ENCODE measurements at regions of chr4 and their contacts with region 1.

Region 1: DNA sequence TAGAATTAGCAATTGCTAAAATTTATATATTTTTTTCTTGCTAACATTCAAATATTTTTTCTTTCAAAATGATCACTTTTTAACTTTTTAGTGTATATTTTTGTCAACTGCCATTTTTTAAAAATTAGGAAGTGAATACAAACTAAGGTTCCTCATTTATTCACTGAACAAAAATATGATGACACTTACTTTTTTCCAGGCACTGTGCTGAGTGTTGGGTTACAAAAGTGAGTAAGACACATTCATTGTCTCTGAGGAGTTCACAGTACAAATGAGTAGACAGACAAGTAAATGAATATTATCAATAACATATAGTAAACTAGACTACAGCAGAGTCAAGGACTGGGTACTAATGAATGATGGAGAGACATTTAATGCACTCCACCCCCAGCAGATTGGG is 543.5 kb downstream of the PDHA2 start:
- DNase-seq: no peak
- ATAC-seq: no peak
- H3K4me3 Mint-ChIP-seq: no peak overlapping the region
- H3K27ac Mint-ChIP-seq: no peak overlapping the region
- H3K4me1 Mint-ChIP-seq: no peaks in the 10 kb centered on the region
- H3K27me3 Mint-ChIP-seq: peaks cover 3% of the 10 kb centered on the region; the same call in 1 of the 2 replicates
- CTCF ChIP-seq: no peak

Region 2: DNA sequence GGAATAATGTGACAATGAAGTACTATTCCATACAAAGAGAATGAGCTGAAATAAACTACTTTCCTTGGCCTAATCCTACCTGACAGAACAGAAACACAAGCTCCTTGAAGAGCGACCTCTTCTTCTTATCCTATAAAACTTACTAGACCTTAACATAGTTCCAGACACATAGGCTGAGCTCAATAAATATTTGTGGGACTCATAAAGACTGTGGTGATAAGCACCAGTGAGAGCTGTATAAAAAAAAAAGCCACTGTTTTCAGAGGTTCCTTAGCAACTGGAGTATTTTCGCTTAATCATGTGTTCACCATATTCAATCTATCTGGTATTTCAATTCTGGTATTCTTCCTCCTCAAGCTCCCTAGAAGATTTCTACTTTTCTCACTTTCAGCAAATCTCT is 630.4 kb after region 1 on chr4:
- CTCF ChIA-PET with region 1: interaction called, 10 read pairs
- POLR2A ChIA-PET with region 1: no interaction called
- DNase-seq: no peak
- ATAC-seq: no peak
- H3K4me3 Mint-ChIP-seq: no peak overlapping the region
- H3K27ac Mint-ChIP-seq: no peak overlapping the region
- H3K4me1 Mint-ChIP-seq: peaks cover 7% of the 10 kb centered on the region
- H3K27me3 Mint-ChIP-seq: no peaks in the 10 kb centered on the region
- CTCF ChIP-seq: no peak

Measured in WTC11 (cell line).